ENCODE measurements at regions of chr1 and their contacts with region 1.

Region 1: GRCh38 chr1:11099310-11100149 is at the start of gene EXOSC10:
- DNase-seq: peak; percentile 93 to 97
- ATAC-seq: peak; percentile 96 to 98 (median 98)
- H3K4me3 ChIP-seq: peak within 1 kb of the TSS; percentile 88
- H3K4me3 Mint-ChIP-seq: peak within 1 kb of the TSS; percentile 98
- H3K27ac ChIP-seq: peak within 1 kb of the TSS; percentile 71
- H3K27ac Mint-ChIP-seq: peak within 1 kb of the TSS; percentile 89 to 92
- H3K4me1 ChIP-seq: peaks cover 13% of the 10 kb centered on the region
- H3K4me1 Mint-ChIP-seq: peaks cover 13 to 16% of the 10 kb centered on the region in 2 donors
- H3K27me3 ChIP-seq: no peaks in the 10 kb centered on the region
- H3K27me3 Mint-ChIP-seq: no peaks in the 10 kb centered on the region
- CTCF ChIP-seq: no peak
- total RNA-seq, gene EXOSC10: 85.2 to 97.2 (median 94.9) TPM

Region 2: GRCh38 chr1:10835423-10836421 is 263.8 kb before region 1 on chr1:
- intact Hi-C with region 1: no loop called
- DNase-seq: no peak
- ATAC-seq: peak in 1 of 3 donors; percentile 30
- H3K4me3 ChIP-seq: no peak overlapping the region
- H3K4me3 Mint-ChIP-seq: no peak overlapping the region
- H3K27ac ChIP-seq: no peak overlapping the region
- H3K27ac Mint-ChIP-seq: no peak overlapping the region
- H3K4me1 ChIP-seq: no peaks in the 10 kb centered on the region
- H3K4me1 Mint-ChIP-seq: no peaks in the 10 kb centered on the region
- H3K27me3 ChIP-seq: peaks cover 12% of the 10 kb centered on the region
- H3K27me3 Mint-ChIP-seq: peaks cover 13 to 37% of the 10 kb centered on the region in 2 donors
- CTCF ChIP-seq: no peak

Region 3: GRCh38 chr1:11059990-11060830 is 39.3 kb before region 1 on chr1 and contains the start of gene SRM:
- intact Hi-C with region 1: loop called (anchors 1 kb)
- DNase-seq: peak; percentile 92 to 95
- ATAC-seq: peak; percentile 93 to 98 (median 93)
- H3K4me3 ChIP-seq: peak within 1 kb of the TSS; percentile 75
- H3K4me3 Mint-ChIP-seq: peak within 1 kb of the TSS; percentile 92
- H3K27ac ChIP-seq: peak within 1 kb of the TSS; percentile 28
- H3K27ac Mint-ChIP-seq: peak within 1 kb of the TSS; percentile 86 to 90
- H3K4me1 ChIP-seq: peaks cover 47% of the 10 kb centered on the region
- H3K4me1 Mint-ChIP-seq: peaks cover 30 to 41% of the 10 kb centered on the region in 2 donors
- H3K27me3 ChIP-seq: no peaks in the 10 kb centered on the region
- H3K27me3 Mint-ChIP-seq: no peaks in the 10 kb centered on the region
- CTCF ChIP-seq: peak; percentile 36
- total RNA-seq, gene SRM: 23.9 to 30.9 (median 29.2) TPM

Region 4: DNA sequence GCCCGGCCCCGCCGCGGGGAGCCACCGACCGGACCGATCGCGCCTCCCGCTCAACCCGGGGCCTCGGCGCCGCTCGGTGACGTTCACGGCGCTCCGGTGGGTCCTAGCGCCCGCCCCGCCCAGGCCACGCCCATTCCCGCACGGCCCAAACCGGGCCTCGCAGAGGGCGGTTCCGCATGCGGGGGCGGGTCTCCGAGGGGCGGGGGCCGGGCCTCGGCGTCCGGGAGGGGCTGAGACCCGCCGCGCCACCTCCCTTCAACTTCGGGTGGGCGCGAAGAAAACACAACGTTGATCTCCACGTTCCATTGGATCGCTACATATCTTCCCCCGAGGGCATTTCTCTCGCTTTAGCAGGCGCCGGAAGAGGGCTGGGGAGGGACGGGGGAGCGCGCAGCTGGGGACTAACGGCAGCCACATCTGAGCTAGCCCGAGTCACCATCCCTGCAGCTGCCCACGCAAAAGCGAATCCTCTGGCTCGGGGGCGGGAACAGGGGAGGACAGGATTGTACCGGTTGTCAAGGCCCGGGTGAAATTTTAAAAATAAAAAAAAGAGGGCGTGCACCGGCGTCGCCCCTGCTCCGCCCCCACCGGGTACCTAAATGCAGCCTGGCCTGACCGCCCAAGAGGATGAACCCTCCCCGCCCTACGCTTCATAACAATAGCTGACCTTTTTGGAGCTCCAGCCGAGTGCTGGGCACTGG is 581.7 kb after region 1 on chr1 and contains the start of gene MAD2L2:
- intact Hi-C with region 1: no loop called
- DNase-seq: peak; percentile 90 to 93
- ATAC-seq: peak; percentile 92 to 96 (median 93)
- H3K4me3 ChIP-seq: peak within 1 kb of the TSS; percentile 98
- H3K4me3 Mint-ChIP-seq: peak within 1 kb of the TSS; percentile 92
- H3K27ac ChIP-seq: peak within 1 kb of the TSS; percentile 61
- H3K27ac Mint-ChIP-seq: peak within 1 kb of the TSS; percentile 62 to 91
- H3K4me1 ChIP-seq: peaks cover 23% of the 10 kb centered on the region
- H3K4me1 Mint-ChIP-seq: peaks cover 5 to 24% of the 10 kb centered on the region in 2 donors
- H3K27me3 ChIP-seq: no peaks in the 10 kb centered on the region
- H3K27me3 Mint-ChIP-seq: no peaks in the 10 kb centered on the region
- CTCF ChIP-seq: no peak
- total RNA-seq, gene MAD2L2: 50.6 to 66.0 (median 60.4) TPM